ENCODE measurements at regions of chr6 and their contacts with region 1.

Region 1: GRCh38 chr6:53725791-53726431 is 60.4 kb upstream of the KLHL31 start:
- DNase-seq: peak; percentile 70
- H3K4me3 ChIP-seq: no peak overlapping the region
- H3K27ac ChIP-seq: no peak overlapping the region
- H3K4me1 ChIP-seq: no peaks in the 10 kb centered on the region
- H3K27me3 ChIP-seq: no peaks in the 10 kb centered on the region
- CTCF ChIP-seq: peak; percentile 91 to 98
- POLR2A ChIP-seq: no peak

Region 2: DNA sequence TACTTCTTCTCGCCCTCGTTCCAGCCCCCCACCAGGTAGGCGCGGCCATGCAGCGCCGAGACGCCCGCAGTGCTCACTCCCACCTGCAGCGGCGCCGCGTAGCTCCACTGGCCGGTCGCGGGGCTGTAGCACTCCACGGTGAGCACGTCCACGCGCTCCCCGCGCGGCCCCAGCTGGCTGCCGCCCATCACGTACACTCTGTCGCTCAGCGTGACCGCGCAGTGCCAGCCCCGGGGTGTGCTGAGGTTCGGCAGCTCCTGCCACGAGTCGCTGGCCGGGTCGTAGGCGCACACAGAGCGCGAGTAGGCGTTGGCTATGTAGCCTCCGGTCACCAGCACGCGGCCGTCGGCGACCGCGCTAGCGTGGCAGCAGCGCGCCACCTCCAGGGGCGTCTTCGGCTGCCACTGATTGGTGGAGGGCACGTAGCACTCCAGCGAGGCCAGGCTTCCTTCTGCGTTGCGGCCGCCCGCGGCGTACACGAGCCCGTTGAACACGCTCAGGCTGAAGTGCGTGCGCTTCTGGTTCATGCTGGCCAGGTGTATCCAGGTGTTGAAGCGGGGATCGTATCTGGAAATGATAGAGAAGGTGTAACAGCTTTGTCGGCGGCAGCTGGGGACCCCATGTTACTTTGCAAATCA is 74.0 kb before region 1 on chr6:
- CTCF ChIA-PET with region 1: interaction called, 9 read pairs
- POLR2A ChIA-PET with region 1: no interaction called
- dilution Hi-C with region 1: no loop called
- intact Hi-C with region 1: loop called (anchors 5 kb)
- DNase-seq: peak; percentile 64
- H3K4me3 ChIP-seq: peak overlapping the region in 2 of 3 experiments; percentile 42 to 48
- H3K27ac ChIP-seq: no peak overlapping the region
- H3K4me1 ChIP-seq: peaks cover 5% of the 10 kb centered on the region
- H3K27me3 ChIP-seq: peaks cover 9 to 10% of the 10 kb centered on the region in 2 experiments
- CTCF ChIP-seq: peak in 1 of 2 donors; percentile 48
- POLR2A ChIP-seq: no peak

Region 3: DNA sequence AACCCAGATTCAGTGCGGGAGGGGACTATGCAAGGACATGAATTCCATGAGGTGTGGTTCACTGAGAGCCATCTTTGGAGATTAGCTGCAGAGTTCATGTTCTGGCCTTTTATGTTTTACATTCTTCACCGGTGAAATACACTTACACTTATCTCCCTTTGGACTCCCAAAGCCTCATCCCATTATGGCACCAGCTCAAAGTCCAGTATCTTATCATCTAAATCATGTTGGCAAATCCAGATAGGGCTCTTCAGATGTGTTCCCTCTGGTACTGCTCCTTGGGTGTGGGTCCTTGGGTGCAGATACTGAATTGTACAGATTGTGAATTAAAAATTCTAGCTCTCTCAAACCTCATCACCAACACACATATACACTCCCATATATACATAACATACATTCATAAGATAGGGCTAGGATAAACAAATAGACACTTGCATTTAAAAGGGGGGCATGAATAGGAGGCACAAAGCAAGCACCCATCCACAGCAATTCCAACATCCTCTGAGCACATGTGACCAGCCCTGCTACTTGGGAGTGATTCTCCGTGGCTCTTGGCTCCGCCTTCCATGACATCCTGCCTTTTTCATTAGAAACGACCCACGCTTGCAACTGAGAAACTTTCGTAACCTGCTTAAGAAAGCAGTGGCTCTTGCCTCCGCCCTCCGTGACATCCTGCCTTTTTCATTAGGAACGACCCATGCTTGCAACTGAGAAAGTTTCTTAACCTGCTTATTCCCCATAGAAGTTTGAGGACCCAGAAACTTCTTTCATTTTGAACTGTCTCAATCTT is 15.3 kb after region 1 on chr6:
- CTCF ChIA-PET with region 1: interaction called, 24 read pairs
- POLR2A ChIA-PET with region 1: no interaction called
- dilution Hi-C with region 1: no loop called
- intact Hi-C with region 1: no loop called
- DNase-seq: no peak
- H3K4me3 ChIP-seq: no peak overlapping the region
- H3K27ac ChIP-seq: no peak overlapping the region
- H3K4me1 ChIP-seq: peaks cover 16% of the 10 kb centered on the region
- H3K27me3 ChIP-seq: no peaks in the 10 kb centered on the region
- CTCF ChIP-seq: no peak
- POLR2A ChIP-seq: no peak

Region 4: GRCh38 chr6:53752856-53753255 is 26.9 kb after region 1 on chr6:
- CTCF ChIA-PET with region 1: interaction called, 24 read pairs
- POLR2A ChIA-PET with region 1: no interaction called
- dilution Hi-C with region 1: no loop called
- intact Hi-C with region 1: no loop called
- DNase-seq: peak; percentile 50
- H3K4me3 ChIP-seq: no peak overlapping the region
- H3K27ac ChIP-seq: peak overlapping the region; percentile 75
- H3K4me1 ChIP-seq: peaks cover 15% of the 10 kb centered on the region
- H3K27me3 ChIP-seq: no peaks in the 10 kb centered on the region
- CTCF ChIP-seq: no peak
- POLR2A ChIP-seq: no peak

Region 5: DNA sequence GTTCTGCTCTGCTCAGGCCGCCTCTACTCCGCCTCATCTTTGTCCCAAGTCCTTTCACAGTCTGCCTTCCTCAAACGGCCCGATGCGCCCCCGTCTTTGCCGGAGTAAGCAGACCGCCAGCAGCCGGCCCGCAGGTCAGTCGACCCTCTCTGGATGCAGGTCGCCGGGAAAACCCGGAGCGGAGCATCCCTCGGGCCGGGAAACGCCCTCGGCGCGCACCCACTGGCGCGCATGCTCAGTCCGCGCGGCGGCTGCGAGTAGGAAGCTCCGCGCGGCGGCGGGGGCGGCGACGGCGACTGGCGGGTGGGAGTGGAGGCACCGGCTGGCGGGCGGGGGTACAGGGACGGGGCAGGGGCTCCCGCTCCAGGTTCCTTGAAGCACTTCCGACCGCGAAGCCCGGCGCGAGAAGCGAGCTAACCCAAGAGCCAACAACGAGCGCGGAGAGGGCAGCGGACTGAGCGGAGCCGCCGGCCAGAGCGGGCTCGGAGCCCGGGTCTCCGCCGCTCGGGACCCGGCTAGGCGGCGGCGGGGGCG is 68.9 kb after region 1 on chr6 and contains the start of gene LRRC1:
- CTCF ChIA-PET with region 1: interaction called, 123 read pairs
- POLR2A ChIA-PET with region 1: no interaction called
- dilution Hi-C with region 1: no loop called
- intact Hi-C with region 1: no loop called
- DNase-seq: peak; percentile 95
- H3K4me3 ChIP-seq: peak within 1 kb of the TSS; percentile 58 to 76 (median 72)
- H3K27ac ChIP-seq: peak within 1 kb of the TSS; percentile 43
- H3K4me1 ChIP-seq: peaks cover 25% of the 10 kb centered on the region
- H3K27me3 ChIP-seq: no peaks in the 10 kb centered on the region
- CTCF ChIP-seq: no peak
- POLR2A ChIP-seq: peak; percentile 83
- total RNA-seq, gene LRRC1: 10.6 and 11.7 TPM in 2 replicates

Measured in endothelial cell of umbilical vein (primary cell).